T-cell (primary cell): ENCODE measurements at regions of chr3 and their contacts with region 1.

Region 1: GRCh38 chr3:39519554-39520288 is 52.2 kb downstream of the MOBP start:
- DNase-seq: no peak
- ATAC-seq: no peak
- H3K4me3 ChIP-seq: no peak overlapping the region
- H3K4me3 Mint-ChIP-seq: no peak overlapping the region
- H3K27ac ChIP-seq: no peak overlapping the region
- H3K27ac Mint-ChIP-seq: no peak overlapping the region
- H3K4me1 ChIP-seq: no peaks in the 10 kb centered on the region
- H3K4me1 Mint-ChIP-seq: no peaks in the 10 kb centered on the region
- H3K27me3 ChIP-seq: peaks cover 0 to 4% of the 10 kb centered on the region in 2 experiments
- H3K27me3 Mint-ChIP-seq: peaks cover 12 to 36% of the 10 kb centered on the region in 2 donors

Region 2: GRCh38 chr3:39531650-39532049 is 11.9 kb after region 1 on chr3:
- CTCF ChIA-PET with region 1: no interaction called
- POLR2A ChIA-PET with region 1: interaction called in 1 of 2 experiments, 10 read pairs
- DNase-seq: no peak
- ATAC-seq: no peak
- H3K4me3 ChIP-seq: no peak overlapping the region
- H3K4me3 Mint-ChIP-seq: no peak overlapping the region
- H3K27ac ChIP-seq: no peak overlapping the region
- H3K27ac Mint-ChIP-seq: no peak overlapping the region
- H3K4me1 ChIP-seq: no peaks in the 10 kb centered on the region
- H3K4me1 Mint-ChIP-seq: no peaks in the 10 kb centered on the region
- H3K27me3 ChIP-seq: peaks cover 0 to 8% of the 10 kb centered on the region in 2 experiments
- H3K27me3 Mint-ChIP-seq: peaks cover 17 to 30% of the 10 kb centered on the region in 2 donors

Region 3: GRCh38 chr3:40427045-40427669 is 907.4 kb after region 1 on chr3:
- CTCF ChIA-PET with region 1: no interaction called
- POLR2A ChIA-PET with region 1: no interaction called
- DNase-seq: no peak
- ATAC-seq: no peak
- H3K4me3 ChIP-seq: no peak overlapping the region
- H3K4me3 Mint-ChIP-seq: no peak overlapping the region
- H3K27ac ChIP-seq: no peak overlapping the region
- H3K27ac Mint-ChIP-seq: no peak overlapping the region
- H3K4me1 ChIP-seq: peaks cover 0 to 3% of the 10 kb centered on the region in 2 experiments
- H3K4me1 Mint-ChIP-seq: peaks cover 5 to 13% (median 5%) of the 10 kb centered on the region in 3 donors
- H3K27me3 ChIP-seq: peaks cover 0 to 5% of the 10 kb centered on the region in 2 experiments
- H3K27me3 Mint-ChIP-seq: peaks cover 0 to 7% of the 10 kb centered on the region in 2 donors